B cell (primary cell): ENCODE measurements at regions of chr7 and their contacts with region 1.

Region 1: GRCh38 chr7:35707422-35707821 is 12.5 kb upstream of the HERPUD2 start:
- DNase-seq: no peak
- ATAC-seq: no peak
- H3K4me3 ChIP-seq: no peak overlapping the region
- H3K4me3 Mint-ChIP-seq: no peak overlapping the region
- H3K27ac ChIP-seq: no peak overlapping the region
- H3K27ac Mint-ChIP-seq: no peak overlapping the region
- H3K4me1 ChIP-seq: peaks cover 8 to 12% of the 10 kb centered on the region in 2 donors
- H3K4me1 Mint-ChIP-seq: peaks cover 7% of the 10 kb centered on the region
- H3K27me3 ChIP-seq: no peaks in the 10 kb centered on the region
- H3K27me3 Mint-ChIP-seq: no peaks in the 10 kb centered on the region
- CTCF ChIP-seq: no peak

Region 2: GRCh38 chr7:35694781-35695472 is 12.5 kb before region 1 on chr7 and contains the start of gene HERPUD2:
- CTCF ChIA-PET with region 1: interaction called, 14 read pairs
- POLR2A ChIA-PET with region 1: no interaction called
- intact Hi-C with region 1: loop called (anchors 1 kb)
- DNase-seq: peak; percentile 94
- ATAC-seq: peak; percentile 91
- H3K4me3 ChIP-seq: peak within 1 kb of the TSS; percentile 78 to 98 (median 94)
- H3K4me3 Mint-ChIP-seq: peak within 1 kb of the TSS; percentile 98
- H3K27ac ChIP-seq: peak within 1 kb of the TSS; percentile 82 to 98
- H3K27ac Mint-ChIP-seq: peak within 1 kb of the TSS; percentile 97
- H3K4me1 ChIP-seq: peaks cover 40 to 44% of the 10 kb centered on the region in 2 donors
- H3K4me1 Mint-ChIP-seq: peaks cover 57% of the 10 kb centered on the region
- H3K27me3 ChIP-seq: no peaks in the 10 kb centered on the region
- H3K27me3 Mint-ChIP-seq: no peaks in the 10 kb centered on the region
- CTCF ChIP-seq: no peak
- total RNA-seq, gene HERPUD2: 54.6 and 58.8 TPM in 2 replicates

Region 3: DNA sequence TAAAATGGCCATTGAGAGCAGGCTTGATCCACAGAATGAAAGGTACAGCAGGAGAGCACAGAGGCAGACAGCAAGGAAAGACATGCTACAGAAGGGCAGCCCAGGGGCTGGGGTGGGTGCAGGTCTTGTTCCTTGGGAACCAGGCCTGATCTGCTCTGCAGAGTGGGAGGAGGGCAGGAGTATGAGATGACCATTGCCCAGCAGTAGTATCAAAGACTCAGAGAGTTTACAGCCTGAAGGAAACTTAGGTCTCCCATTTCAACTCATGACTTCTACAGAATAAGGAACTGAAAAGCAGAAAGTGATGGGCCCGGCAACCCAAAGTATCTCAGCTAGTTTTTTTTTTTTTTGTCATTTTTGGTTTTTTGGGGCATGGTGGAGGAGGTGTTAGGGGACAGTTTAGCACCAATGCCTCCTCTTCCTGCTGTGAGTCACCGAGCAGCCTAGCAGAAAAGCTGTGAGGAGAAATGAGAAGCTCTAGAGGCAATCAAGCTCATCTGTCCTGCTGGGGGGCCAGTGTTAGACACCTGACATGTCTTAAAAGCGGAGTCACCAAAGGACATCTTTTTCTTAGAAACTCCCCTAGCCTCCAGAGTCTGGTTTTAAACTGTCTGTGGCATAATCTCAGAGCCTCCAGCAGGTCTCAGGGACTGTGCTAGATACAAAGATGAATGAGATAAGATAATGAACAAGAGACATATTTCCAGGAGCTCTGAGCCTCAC is 21.8 kb after region 1 on chr7:
- CTCF ChIA-PET with region 1: interaction called, 171 read pairs
- POLR2A ChIA-PET with region 1: interaction called, 12 read pairs
- intact Hi-C with region 1: loop called (anchors 1 kb)
- DNase-seq: peak; percentile 92
- ATAC-seq: peak; percentile 78
- H3K4me3 ChIP-seq: peak overlapping the region in 4 of 5 experiments; percentile 12 to 56 (median 28)
- H3K4me3 Mint-ChIP-seq: peak overlapping the region; percentile 79
- H3K27ac ChIP-seq: peak overlapping the region; percentile 93 to 99
- H3K27ac Mint-ChIP-seq: peak overlapping the region; percentile 99
- H3K4me1 ChIP-seq: peaks cover 73 to 77% of the 10 kb centered on the region in 2 donors
- H3K4me1 Mint-ChIP-seq: peaks cover 78% of the 10 kb centered on the region
- H3K27me3 ChIP-seq: no peaks in the 10 kb centered on the region
- H3K27me3 Mint-ChIP-seq: no peaks in the 10 kb centered on the region
- CTCF ChIP-seq: no peak

Region 4: GRCh38 chr7:35839860-35840854 is 132.7 kb after region 1 on chr7:
- CTCF ChIA-PET with region 1: interaction called, 23 read pairs
- POLR2A ChIA-PET with region 1: interaction called, 3 read pairs
- intact Hi-C with region 1: no loop called
- DNase-seq: no peak
- ATAC-seq: no peak
- H3K4me3 ChIP-seq: no peak overlapping the region
- H3K4me3 Mint-ChIP-seq: no peak overlapping the region
- H3K27ac ChIP-seq: peak overlapping the region in 1 of 2 donors; percentile 12
- H3K27ac Mint-ChIP-seq: no peak overlapping the region
- H3K4me1 ChIP-seq: no peaks in the 10 kb centered on the region
- H3K4me1 Mint-ChIP-seq: peaks cover 23% of the 10 kb centered on the region
- H3K27me3 ChIP-seq: no peaks in the 10 kb centered on the region
- H3K27me3 Mint-ChIP-seq: no peaks in the 10 kb centered on the region
- CTCF ChIP-seq: no peak

Region 5: DNA sequence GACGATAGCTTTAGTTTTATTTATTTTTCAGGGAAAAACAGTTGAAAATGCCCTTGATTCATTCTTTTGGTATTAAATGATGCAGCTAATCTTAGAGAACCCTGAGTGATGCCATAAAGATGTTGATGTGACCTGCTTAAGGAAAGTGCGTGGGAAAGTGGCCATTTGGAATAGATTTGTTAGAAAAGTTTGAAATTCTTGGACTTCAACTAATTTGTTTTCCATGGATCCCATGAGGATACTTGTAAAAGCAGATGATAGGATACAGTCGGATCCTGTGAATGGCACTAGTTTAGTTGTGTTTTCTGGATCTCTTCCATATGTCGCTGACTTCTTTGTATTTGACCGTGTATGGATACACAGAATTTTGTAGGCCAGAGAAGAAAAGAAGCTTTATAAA is 162.4 kb after region 1 on chr7:
- CTCF ChIA-PET with region 1: interaction called, 11 read pairs
- POLR2A ChIA-PET with region 1: no interaction called
- intact Hi-C with region 1: loop called (anchors 2 kb)
- DNase-seq: no peak
- ATAC-seq: no peak
- H3K4me3 ChIP-seq: no peak overlapping the region
- H3K4me3 Mint-ChIP-seq: no peak overlapping the region
- H3K27ac ChIP-seq: no peak overlapping the region
- H3K27ac Mint-ChIP-seq: no peak overlapping the region
- H3K4me1 ChIP-seq: peaks cover 9 to 16% of the 10 kb centered on the region in 2 donors
- H3K4me1 Mint-ChIP-seq: peaks cover 33% of the 10 kb centered on the region
- H3K27me3 ChIP-seq: no peaks in the 10 kb centered on the region
- H3K27me3 Mint-ChIP-seq: no peaks in the 10 kb centered on the region
- CTCF ChIP-seq: no peak

Region 6: GRCh38 chr7:35906191-35906908 is 198.9 kb after region 1 on chr7:
- CTCF ChIA-PET with region 1: interaction called, 95 read pairs
- POLR2A ChIA-PET with region 1: no interaction called
- intact Hi-C with region 1: loop called (anchors 1 kb)
- DNase-seq: peak; percentile 85
- ATAC-seq: peak; percentile 95
- H3K4me3 ChIP-seq: no peak overlapping the region
- H3K4me3 Mint-ChIP-seq: no peak overlapping the region
- H3K27ac ChIP-seq: peak overlapping the region in 1 of 2 donors; percentile 55
- H3K27ac Mint-ChIP-seq: peak overlapping the region; percentile 73
- H3K4me1 ChIP-seq: peaks cover 0 to 2% of the 10 kb centered on the region in 2 donors
- H3K4me1 Mint-ChIP-seq: peaks cover 5% of the 10 kb centered on the region
- H3K27me3 ChIP-seq: no peaks in the 10 kb centered on the region
- H3K27me3 Mint-ChIP-seq: no peaks in the 10 kb centered on the region
- CTCF ChIP-seq: peak; percentile 96